ENCODE measurements at regions of chr11 and their contacts with region 1.

Region 1: DNA sequence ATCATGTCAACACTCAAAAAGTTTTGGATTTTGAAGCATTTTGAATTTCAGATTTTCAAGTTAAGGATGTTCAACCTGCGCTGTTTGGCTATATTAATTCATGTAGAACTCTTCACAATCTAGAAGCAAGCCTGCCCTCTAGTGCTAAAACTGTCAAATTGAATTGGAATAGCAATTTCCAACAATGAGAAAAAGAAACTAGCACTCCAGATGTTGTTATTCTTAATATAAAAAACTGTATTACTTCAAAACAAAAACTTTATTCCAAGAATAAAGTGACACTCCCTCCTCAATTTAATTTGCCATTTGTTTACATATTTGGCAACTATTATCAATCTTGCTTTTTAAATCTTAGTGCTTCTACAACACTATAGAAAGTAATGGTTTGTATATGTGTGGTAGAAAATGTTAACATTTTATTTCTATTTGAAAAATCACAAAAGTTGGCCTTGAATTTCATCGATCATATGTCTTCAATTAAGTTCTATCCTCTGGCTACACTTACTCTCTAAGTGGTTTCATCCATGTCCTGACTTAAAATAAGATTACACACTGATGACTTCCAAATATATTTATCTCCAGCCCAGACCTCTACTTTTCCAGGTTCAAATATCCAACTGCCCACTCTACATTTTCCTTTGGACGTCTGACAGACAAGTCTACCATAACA is 36.6 kb downstream of the DCUN1D5 start:
- DNase-seq: peak; percentile 16
- H3K4me3 ChIP-seq: no peak overlapping the region
- H3K27ac ChIP-seq: no peak overlapping the region
- H3K27me3 ChIP-seq: no peaks in the 10 kb centered on the region
- CTCF ChIP-seq: peak; percentile 67

Region 2: DNA sequence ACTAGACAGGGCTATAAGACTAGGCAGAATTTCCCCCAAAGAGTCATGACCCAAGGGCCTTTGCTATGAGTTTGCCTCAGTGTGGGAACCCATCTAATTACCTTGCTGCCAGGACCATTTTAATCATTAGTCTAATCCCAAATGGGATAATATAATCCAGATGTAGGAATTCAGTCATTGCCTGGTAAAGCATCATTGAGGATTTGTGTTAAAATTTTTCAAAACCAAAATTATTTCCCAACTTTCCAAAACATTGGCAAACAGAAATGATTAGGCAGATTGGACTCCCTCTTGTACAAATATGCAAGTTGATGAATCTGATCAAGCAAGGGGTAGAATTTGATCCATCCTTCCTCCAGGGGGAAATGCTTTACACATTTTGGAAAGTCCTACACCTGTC is 83.6 kb before region 1 on chr11:
- CTCF ChIA-PET with region 1: no interaction called
- POLR2A ChIA-PET with region 1: no interaction called
- DNase-seq: no peak
- H3K4me3 ChIP-seq: no peak overlapping the region
- H3K27ac ChIP-seq: no peak overlapping the region
- H3K27me3 ChIP-seq: no peaks in the 10 kb centered on the region
- CTCF ChIP-seq: no peak

Region 3: GRCh38 chr11:103035791-103036434 is 19.4 kb before region 1 on chr11:
- CTCF ChIA-PET with region 1: interaction called, 15 read pairs
- POLR2A ChIA-PET with region 1: no interaction called
- DNase-seq: peak; percentile 34
- H3K4me3 ChIP-seq: no peak overlapping the region
- H3K27ac ChIP-seq: no peak overlapping the region
- H3K27me3 ChIP-seq: no peaks in the 10 kb centered on the region
- CTCF ChIP-seq: peak; percentile 66

Measured in AG04450 (cell line).